WTC11 (cell line): ENCODE measurements at regions of chr16 and their contacts with region 1.

Region 1: GRCh38 chr16:69112285-69113129 is 7.1 kb downstream of the HAS3 start:
- DNase-seq: peak; percentile 89
- ATAC-seq: peak; percentile 81
- H3K4me3 Mint-ChIP-seq: no peak overlapping the region
- H3K27ac Mint-ChIP-seq: peak overlapping the region; percentile 77
- H3K4me1 Mint-ChIP-seq: peaks cover 42% of the 10 kb centered on the region
- H3K27me3 Mint-ChIP-seq: no peaks in the 10 kb centered on the region
- CTCF ChIP-seq: peak; percentile 80

Region 2: DNA sequence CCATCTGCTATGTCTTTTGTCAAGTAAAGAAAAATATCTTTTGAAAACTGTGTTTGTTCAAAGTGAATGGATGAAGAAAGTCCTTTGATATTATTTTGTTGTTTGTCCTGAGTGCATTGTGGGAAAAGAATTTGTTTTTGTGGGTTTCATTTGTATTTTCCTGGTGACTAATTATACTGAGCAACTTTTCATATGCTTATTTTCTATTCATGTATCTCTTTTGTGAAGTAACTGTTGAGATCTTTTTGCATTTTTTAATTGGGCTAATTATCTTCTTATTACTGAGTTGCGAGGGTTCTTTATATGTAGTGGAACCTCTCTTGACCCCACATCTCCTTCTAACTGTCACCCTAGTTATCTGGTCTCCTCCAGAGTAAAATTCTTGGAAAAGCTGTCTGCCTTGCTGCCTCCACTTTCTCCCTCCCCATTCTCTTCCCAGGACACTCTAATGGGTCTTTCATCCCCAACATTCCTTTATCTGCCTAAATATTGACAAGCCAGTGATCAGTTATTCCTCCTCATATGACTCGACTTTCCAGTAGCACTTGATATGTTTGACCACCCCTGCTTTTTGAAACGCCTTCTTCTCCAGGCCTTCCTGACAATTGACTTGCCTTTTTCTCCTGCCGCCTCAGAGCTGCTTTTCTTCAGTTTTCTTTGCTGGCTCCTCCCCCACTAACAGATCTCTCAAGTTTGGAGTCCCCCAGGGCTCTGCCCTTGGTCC is 124.6 kb before region 1 on chr16:
- CTCF ChIA-PET with region 1: interaction called, 15 read pairs
- POLR2A ChIA-PET with region 1: interaction called, 7 read pairs
- DNase-seq: no peak
- ATAC-seq: peak; percentile 68; the same call in 1 of the 2 replicates
- H3K4me3 Mint-ChIP-seq: no peak overlapping the region; the same call in 1 of the 2 replicates
- H3K27ac Mint-ChIP-seq: peak overlapping the region; percentile 81
- H3K4me1 Mint-ChIP-seq: peaks cover 55% of the 10 kb centered on the region
- H3K27me3 Mint-ChIP-seq: no peaks in the 10 kb centered on the region; the same call in 1 of the 2 replicates
- CTCF ChIP-seq: no peak

Region 3: DNA sequence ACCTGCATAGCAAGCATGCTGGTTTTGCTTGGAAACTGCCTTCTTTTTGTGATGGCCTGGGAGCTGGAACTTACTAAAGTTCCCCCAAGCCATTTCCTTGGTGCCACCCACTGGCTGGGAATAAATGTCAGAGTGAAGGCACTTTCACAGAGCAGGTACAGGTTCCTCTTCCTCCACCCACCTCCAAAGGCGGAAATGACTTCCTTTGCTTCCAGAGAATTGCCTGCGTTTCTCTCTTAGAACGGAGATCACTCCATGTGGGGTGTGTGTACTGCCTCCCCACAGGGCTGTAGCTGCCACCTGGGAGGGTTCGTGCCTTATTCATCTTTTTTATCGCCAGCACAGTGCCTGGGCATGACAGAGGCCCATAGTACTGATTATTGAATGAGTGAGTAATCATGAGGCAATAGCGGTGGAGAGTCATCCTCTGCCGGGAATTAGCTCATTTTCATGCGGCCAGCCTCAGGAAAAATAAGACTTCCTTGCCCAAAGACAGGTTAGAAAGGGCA is 39.3 kb before region 1 on chr16:
- CTCF ChIA-PET with region 1: interaction called, 11 read pairs
- POLR2A ChIA-PET with region 1: interaction called, 3 read pairs
- DNase-seq: no peak
- ATAC-seq: no peak
- H3K4me3 Mint-ChIP-seq: peak overlapping the region; percentile 55
- H3K27ac Mint-ChIP-seq: peak overlapping the region; percentile 96
- H3K4me1 Mint-ChIP-seq: peaks cover 65% of the 10 kb centered on the region
- H3K27me3 Mint-ChIP-seq: no peaks in the 10 kb centered on the region
- CTCF ChIP-seq: no peak

Region 4: GRCh38 chr16:69123910-69124309 is 11.4 kb after region 1 on chr16:
- CTCF ChIA-PET with region 1: interaction called, 49 read pairs
- POLR2A ChIA-PET with region 1: interaction called, 3 read pairs
- DNase-seq: peak; percentile 50
- ATAC-seq: peak; percentile 32
- H3K4me3 Mint-ChIP-seq: no peak overlapping the region
- H3K27ac Mint-ChIP-seq: 0 out of 2 replicates have a peak overlapping the region, but pooled peaks have one; percentile 76
- H3K4me1 Mint-ChIP-seq: no peaks in the 10 kb centered on the region
- H3K27me3 Mint-ChIP-seq: no peaks in the 10 kb centered on the region
- CTCF ChIP-seq: peak; percentile 53

Region 5: GRCh38 chr16:69273009-69273408 is 160.5 kb after region 1 on chr16:
- CTCF ChIA-PET with region 1: no interaction called
- POLR2A ChIA-PET with region 1: no interaction called
- DNase-seq: no peak
- ATAC-seq: no peak
- H3K4me3 Mint-ChIP-seq: no peak overlapping the region
- H3K27ac Mint-ChIP-seq: no peak overlapping the region
- H3K4me1 Mint-ChIP-seq: no peaks in the 10 kb centered on the region
- H3K27me3 Mint-ChIP-seq: no peaks in the 10 kb centered on the region
- CTCF ChIP-seq: no peak

Region 6: GRCh38 chr16:69330286-69331109 is 218.0 kb after region 1 on chr16 and contains the start of gene PDF:
- CTCF ChIA-PET with region 1: no interaction called
- POLR2A ChIA-PET with region 1: no interaction called
- DNase-seq: peak; percentile 95
- ATAC-seq: peak; percentile 96
- H3K4me3 Mint-ChIP-seq: peak within 1 kb of the TSS; percentile 85
- H3K27ac Mint-ChIP-seq: peak within 1 kb of the TSS; percentile 91; the same call in 1 of the 2 replicates
- H3K4me1 Mint-ChIP-seq: peaks cover 22% of the 10 kb centered on the region
- H3K27me3 Mint-ChIP-seq: no peaks in the 10 kb centered on the region
- CTCF ChIP-seq: no peak
- total RNA-seq, gene PDF: 24.0 to 28.2 TPM (median 25.6 TPM) in 3 replicates